SK-MEL-5 (cell line): ENCODE measurements at regions of chr3 and their contacts with region 1.

Region 1: DNA sequence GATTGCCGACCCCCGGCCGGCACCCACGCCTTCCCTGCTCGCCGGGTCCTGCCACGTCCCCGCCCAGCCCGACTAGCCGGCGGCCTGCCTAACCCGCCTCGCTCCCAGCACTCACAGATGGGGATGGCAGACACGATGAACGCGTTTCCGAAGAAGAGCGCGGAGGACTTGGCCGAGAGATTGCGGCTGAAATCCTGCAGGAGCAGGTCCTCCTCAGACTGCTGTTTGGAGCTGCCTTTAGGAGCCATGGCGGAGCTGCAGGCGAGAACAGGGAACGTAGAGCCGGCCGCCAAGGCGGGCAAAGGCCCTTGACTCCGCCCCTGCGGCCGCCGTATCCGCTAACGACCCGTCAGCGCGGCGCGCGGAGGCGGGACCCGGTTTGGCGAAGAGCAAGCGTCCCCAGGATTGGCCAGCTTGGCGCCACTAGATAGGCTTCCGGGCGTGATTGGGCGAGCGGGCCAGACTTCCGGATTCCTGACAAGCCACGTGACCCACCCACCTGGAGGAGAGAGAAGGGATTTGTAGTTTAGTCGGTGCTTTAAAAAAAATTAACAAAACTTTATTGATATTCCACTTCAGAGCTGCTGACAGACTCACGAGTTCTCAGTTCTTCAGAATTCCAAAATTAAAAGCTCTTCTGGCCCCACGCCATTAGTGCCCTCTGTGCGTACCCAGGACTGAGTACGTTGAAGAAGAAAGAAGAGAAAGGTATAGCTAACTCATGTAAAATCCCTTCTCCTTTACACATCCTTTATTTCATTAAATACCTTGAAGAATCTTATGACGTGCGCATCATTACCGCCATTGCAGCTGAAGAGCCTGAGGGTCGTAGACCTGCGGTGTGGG is at the start of gene SSR3:
- DNase-seq: peak; percentile 99
- total RNA-seq, gene SSR3: 340 and 368 TPM in 2 replicates

Region 2: GRCh38 chr3:156727519-156728205 is 172.6 kb after region 1 on chr3:
- in situ Hi-C with region 1: loop called (anchors 10 kb)
- DNase-seq: no peak

Region 3: GRCh38 chr3:156952011-156952410 is 396.9 kb after region 1 on chr3:
- in situ Hi-C with region 1: no loop called
- DNase-seq: no peak